Activated CD8-positive, alpha-beta memory T cell treated with anti-CD3 and anti-CD28 coated beads, Interleukin-2, amount 10 ng/mL, durations not matched to agents 7 days and 5 days (primary cell): ENCODE measurements at regions of chr1 and their contacts with region 1.

Region 1: GRCh38 chr1:161071886-161072371 is 2.2 kb upstream of the ARHGAP30 start:
- DNase-seq: peak; percentile 72
- ATAC-seq: no peak
- H3K4me3 Mint-ChIP-seq: no peak overlapping the region
- H3K27ac Mint-ChIP-seq: peak overlapping the region; percentile 50
- H3K4me1 Mint-ChIP-seq: peaks cover 45% of the 10 kb centered on the region
- H3K27me3 Mint-ChIP-seq: no peaks in the 10 kb centered on the region

Region 2: DNA sequence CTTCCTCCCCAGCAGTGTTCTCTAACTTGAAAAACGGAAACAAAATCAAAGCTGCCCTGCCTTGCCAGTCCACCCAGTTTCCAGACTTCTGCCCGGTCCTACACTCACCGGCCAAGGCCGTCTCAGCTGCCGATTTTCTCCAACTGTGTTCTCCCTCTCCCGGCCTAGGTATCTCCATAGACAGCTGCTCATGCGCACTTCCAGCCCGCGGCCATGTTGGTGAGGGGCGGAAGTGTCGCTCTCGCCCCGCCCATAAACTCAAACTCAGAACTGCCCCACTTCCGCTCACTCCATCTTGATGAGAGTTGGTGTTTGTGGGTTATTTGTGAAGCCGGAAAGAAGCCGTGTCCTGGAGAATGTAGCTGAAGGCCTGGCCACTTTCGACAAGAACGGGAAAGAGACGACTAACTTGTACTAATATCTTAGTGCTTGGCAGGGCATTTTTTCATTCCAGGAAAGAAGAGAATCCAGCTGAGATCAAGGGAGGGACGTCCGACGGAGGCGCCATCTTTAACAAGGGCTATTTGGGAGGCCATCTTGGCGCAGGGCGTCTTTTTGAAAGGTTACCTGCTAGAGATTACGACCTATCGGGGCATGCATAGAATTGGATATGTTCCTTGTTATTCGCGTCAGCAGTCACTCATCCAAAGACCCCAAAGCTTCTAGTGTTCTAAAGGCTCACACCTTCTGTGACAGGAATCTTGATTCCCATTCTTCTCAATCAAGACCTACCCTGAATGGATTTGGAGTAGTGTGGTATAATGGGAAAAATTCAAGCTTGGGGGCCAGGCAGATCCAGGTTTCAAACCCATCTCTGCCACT is 26.0 kb before region 1 on chr1 and contains the start of gene USF1:
- CTCF ChIA-PET with region 1: interaction called, 58 read pairs
- DNase-seq: peak; percentile 96
- ATAC-seq: peak; percentile 78
- H3K4me3 Mint-ChIP-seq: peak within 1 kb of the TSS; percentile 80
- H3K27ac Mint-ChIP-seq: peak within 1 kb of the TSS; percentile 99
- H3K4me1 Mint-ChIP-seq: peaks cover 54% of the 10 kb centered on the region
- H3K27me3 Mint-ChIP-seq: no peaks in the 10 kb centered on the region
- total RNA-seq, gene USF1: 75.4 to 90.1 TPM

Region 3: GRCh38 chr1:161082991-161083742 is 11.2 kb after region 1 on chr1:
- CTCF ChIA-PET with region 1: interaction called, 12 read pairs
- DNase-seq: no peak
- ATAC-seq: no peak
- H3K4me3 Mint-ChIP-seq: no peak overlapping the region
- H3K27ac Mint-ChIP-seq: no peak overlapping the region
- H3K4me1 Mint-ChIP-seq: peaks cover 12% of the 10 kb centered on the region
- H3K27me3 Mint-ChIP-seq: no peaks in the 10 kb centered on the region